Testis (tissue), 5 donors: ENCODE measurements at regions of chr16 and their contacts with region 1.

Region 1: GRCh38 chr16:50354629-50355456 is 13.9 kb downstream of the BRD7 start:
- DNase-seq: no peak
- H3K4me3 ChIP-seq: no peak overlapping the region
- H3K27ac ChIP-seq: no peak overlapping the region
- H3K4me1 ChIP-seq: no peaks in the 10 kb centered on the region
- H3K27me3 ChIP-seq: no peaks in the 10 kb centered on the region
- CTCF ChIP-seq: peak in 1 of 3 experiments; percentile 61
- POLR2A ChIP-seq: no peak

Region 2: GRCh38 chr16:50136399-50136798 is 218.4 kb before region 1 on chr16:
- intact Hi-C with region 1: no loop called
- DNase-seq: no peak
- H3K4me3 ChIP-seq: no peak overlapping the region
- H3K27ac ChIP-seq: no peak overlapping the region
- H3K4me1 ChIP-seq: no peaks in the 10 kb centered on the region
- H3K27me3 ChIP-seq: no peaks in the 10 kb centered on the region
- CTCF ChIP-seq: no peak
- POLR2A ChIP-seq: no peak

Region 3: GRCh38 chr16:50210266-50211038 is 144.4 kb before region 1 on chr16:
- intact Hi-C with region 1: loop called (anchors 10 kb)
- DNase-seq: peak; percentile 93
- H3K4me3 ChIP-seq: no peak overlapping the region
- H3K27ac ChIP-seq: peak overlapping the region in 1 of 2 donors; percentile 11
- H3K4me1 ChIP-seq: peaks cover 24% of the 10 kb centered on the region
- H3K27me3 ChIP-seq: no peaks in the 10 kb centered on the region
- CTCF ChIP-seq: peak; percentile 52 to 76 (median 63)
- POLR2A ChIP-seq: no peak

Region 4: GRCh38 chr16:50335196-50335958 is 19.5 kb before region 1 on chr16:
- intact Hi-C with region 1: no loop called
- DNase-seq: no peak
- H3K4me3 ChIP-seq: no peak overlapping the region
- H3K27ac ChIP-seq: no peak overlapping the region
- H3K4me1 ChIP-seq: peaks cover 2% of the 10 kb centered on the region
- H3K27me3 ChIP-seq: no peaks in the 10 kb centered on the region
- CTCF ChIP-seq: no peak
- POLR2A ChIP-seq: no peak

Region 5: GRCh38 chr16:50681021-50681885 is 326.4 kb after region 1 on chr16 and contains the start of gene SNX20:
- intact Hi-C with region 1: no loop called
- DNase-seq: peak; percentile 29
- H3K4me3 ChIP-seq: no peak within 1 kb of the TSS
- H3K27ac ChIP-seq: no peak within 1 kb of the TSS
- H3K4me1 ChIP-seq: no peaks in the 10 kb centered on the region
- H3K27me3 ChIP-seq: no peaks in the 10 kb centered on the region
- CTCF ChIP-seq: no peak
- POLR2A ChIP-seq: no peak
- total RNA-seq, gene SNX20: 0.63 to 1.8 TPM